ENCODE measurements at regions of chr5 and their contacts with region 1.

Region 1: DNA sequence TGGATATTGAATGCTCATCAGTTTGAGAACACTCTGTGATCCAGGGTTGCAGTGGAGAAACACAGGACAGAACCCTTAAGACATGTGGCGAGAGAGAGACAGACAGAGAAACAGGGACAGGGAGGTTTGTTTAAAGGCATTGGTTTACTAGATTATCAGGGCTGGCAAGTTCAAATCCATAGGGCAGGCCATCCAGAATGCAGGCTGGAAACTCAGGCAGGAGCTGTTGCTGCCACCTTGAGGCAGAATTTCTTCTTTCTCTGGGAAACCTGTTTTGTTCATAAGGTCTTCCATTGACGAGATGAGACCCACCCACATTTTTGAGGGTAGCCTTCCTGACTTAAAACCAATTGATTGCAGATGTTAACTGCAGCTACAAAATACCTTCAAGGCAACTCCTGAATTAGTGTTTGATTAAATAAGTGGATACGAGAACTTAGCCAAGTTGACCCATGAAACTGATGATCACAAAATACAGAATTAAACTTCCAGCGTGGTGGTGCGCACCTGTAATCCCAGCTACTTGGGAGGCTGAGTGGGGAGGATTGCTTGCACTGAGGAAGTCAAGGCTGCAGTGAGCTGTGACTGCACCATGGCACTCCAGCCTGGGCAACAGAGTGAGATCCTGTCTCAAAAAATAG is 55.9 kb downstream of the NSUN2 start:
- DNase-seq: no peak
- ATAC-seq: peak in 7 of 8 donors; percentile 28 to 46 (median 32)
- H3K4me3 ChIP-seq: no peak overlapping the region
- H3K27ac ChIP-seq: no peak overlapping the region
- H3K4me1 ChIP-seq: peaks cover 0 to 18% (median 4%) of the 10 kb centered on the region in 9 donors
- H3K27me3 ChIP-seq: peaks cover 0 to 16% (median 0%) of the 10 kb centered on the region in 7 donors
- CTCF ChIP-seq: peak in 8 of 9 donors; percentile 20 to 62 (median 57)

Region 2: GRCh38 chr5:5886812-5887486 is 690.0 kb before region 1 on chr5:
- intact Hi-C with region 1: loop called in 1 of 10 experiments (anchors 10 kb)
- DNase-seq: peak in 1 of 2 donors; percentile 17
- ATAC-seq: peak in 5 of 8 donors; percentile 20 to 80 (median 44)
- H3K4me3 ChIP-seq: no peak overlapping the region
- H3K27ac ChIP-seq: no peak overlapping the region
- H3K4me1 ChIP-seq: peaks cover 0 to 5% (median 0%) of the 10 kb centered on the region in 9 donors
- H3K27me3 ChIP-seq: peaks cover 0 to 20% (median 5%) of the 10 kb centered on the region in 7 donors
- CTCF ChIP-seq: peak; percentile 11 to 63 (median 56)

Region 3: GRCh38 chr5:6399980-6400910 is 176.7 kb before region 1 on chr5:
- intact Hi-C with region 1: loop called in 1 of 10 experiments (anchors 10 kb)
- DNase-seq: no peak
- ATAC-seq: no peak
- H3K4me3 ChIP-seq: no peak overlapping the region
- H3K27ac ChIP-seq: no peak overlapping the region
- H3K4me1 ChIP-seq: no peaks in the 10 kb centered on the region
- H3K27me3 ChIP-seq: peaks cover 0 to 3% (median 0%) of the 10 kb centered on the region in 7 donors
- CTCF ChIP-seq: no peak

Region 4: DNA sequence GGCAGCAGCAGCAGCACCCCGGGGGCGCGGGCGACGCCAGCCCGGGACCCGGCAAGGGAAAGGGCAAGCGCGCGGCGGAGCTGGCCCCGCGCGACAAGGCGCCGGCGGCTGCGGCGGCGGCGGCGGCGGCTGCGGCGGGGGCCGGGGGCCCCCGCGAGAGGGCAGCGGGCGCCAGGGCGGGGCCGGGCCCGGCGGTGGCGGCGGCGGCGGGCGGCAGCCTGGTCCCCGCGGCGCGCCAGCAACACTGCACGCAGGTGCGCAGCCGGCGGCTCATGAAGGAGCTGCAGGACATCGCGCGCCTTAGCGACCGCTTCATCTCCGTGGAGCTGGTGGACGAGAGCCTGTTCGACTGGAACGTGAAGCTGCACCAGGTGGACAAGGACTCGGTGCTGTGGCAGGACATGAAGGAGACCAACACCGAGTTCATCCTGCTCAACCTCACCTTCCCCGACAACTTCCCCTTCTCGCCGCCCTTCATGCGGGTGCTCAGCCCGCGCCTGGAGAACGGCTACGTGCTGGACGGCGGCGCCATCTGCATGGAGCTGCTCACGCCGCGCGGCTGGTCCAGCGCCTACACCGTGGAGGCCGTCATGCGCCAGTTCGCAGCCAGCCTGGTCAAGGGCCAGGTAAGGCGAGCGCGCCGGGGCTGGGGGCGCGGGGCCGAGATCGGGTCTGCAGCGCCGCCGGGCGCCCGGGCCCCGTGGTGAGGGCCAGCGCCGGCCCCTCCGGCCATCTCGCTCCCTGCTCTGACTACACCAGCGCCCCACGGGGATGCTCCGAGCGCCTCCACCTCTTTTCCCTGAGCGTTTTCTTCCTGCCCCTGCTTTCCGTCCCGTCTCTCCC is 128.1 kb before region 1 on chr5 and contains the start of gene UBE2QL1:
- intact Hi-C with region 1: loop called in 2 of 10 experiments (anchors 10 kb)
- DNase-seq: peak in 1 of 2 donors; percentile 31
- ATAC-seq: peak; percentile 31 to 70 (median 54)
- H3K4me3 ChIP-seq: peak within 1 kb of the TSS; percentile 51 to 74 (median 68)
- H3K27ac ChIP-seq: peak within 1 kb of the TSS in 8 of 10 donors; percentile 42 to 93 (median 56)
- H3K4me1 ChIP-seq: peaks cover 0 to 22% (median 14%) of the 10 kb centered on the region in 9 donors
- H3K27me3 ChIP-seq: peaks cover 0 to 42% (median 24%) of the 10 kb centered on the region in 7 donors
- CTCF ChIP-seq: no peak
- total RNA-seq, gene UBE2QL1: 13.0 to 26.3 (median 18.6) TPM

Region 5: DNA sequence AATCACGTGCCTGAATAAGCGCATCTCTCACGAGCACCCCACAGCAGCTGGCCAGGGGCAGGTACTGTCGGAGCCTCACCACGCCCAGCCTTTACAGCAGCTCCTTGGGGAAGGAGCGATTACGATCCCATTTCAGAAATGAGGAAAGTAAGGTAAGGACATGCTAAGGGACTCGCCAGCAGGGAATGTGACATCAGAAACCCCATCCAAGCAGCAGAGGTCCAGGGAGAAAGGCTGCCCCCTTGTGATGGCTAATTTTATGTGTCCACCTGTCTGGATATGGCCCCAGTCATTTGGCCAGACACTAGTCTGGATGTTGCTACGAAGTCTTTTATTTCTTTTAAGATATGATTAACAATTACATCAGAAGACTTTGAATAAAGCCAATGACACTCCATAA is 51.1 kb before region 1 on chr5:
- intact Hi-C with region 1: no loop called
- DNase-seq: peak in 1 of 2 donors; percentile 46
- ATAC-seq: peak; percentile 46 to 89 (median 70)
- H3K4me3 ChIP-seq: no peak overlapping the region
- H3K27ac ChIP-seq: no peak overlapping the region
- H3K4me1 ChIP-seq: no peaks in the 10 kb centered on the region
- H3K27me3 ChIP-seq: peaks cover 0 to 11% (median 0%) of the 10 kb centered on the region in 7 donors
- CTCF ChIP-seq: peak; percentile 12 to 55 (median 39)

Region 6: GRCh38 chr5:6700074-6700684 is 123.2 kb after region 1 on chr5:
- intact Hi-C with region 1: no loop called
- DNase-seq: no peak
- ATAC-seq: no peak
- H3K4me3 ChIP-seq: no peak overlapping the region
- H3K27ac ChIP-seq: no peak overlapping the region
- H3K4me1 ChIP-seq: peaks cover 12 to 20% (median 17%) of the 10 kb centered on the region in 9 donors
- H3K27me3 ChIP-seq: peaks cover 0 to 13% (median 0%) of the 10 kb centered on the region in 7 donors
- CTCF ChIP-seq: no peak

Measured in heart right ventricle (tissue), 16 donors.